Transverse colon (tissue), 4 donors: ENCODE measurements at regions of chr3 and their contacts with region 1.

Region 1: DNA sequence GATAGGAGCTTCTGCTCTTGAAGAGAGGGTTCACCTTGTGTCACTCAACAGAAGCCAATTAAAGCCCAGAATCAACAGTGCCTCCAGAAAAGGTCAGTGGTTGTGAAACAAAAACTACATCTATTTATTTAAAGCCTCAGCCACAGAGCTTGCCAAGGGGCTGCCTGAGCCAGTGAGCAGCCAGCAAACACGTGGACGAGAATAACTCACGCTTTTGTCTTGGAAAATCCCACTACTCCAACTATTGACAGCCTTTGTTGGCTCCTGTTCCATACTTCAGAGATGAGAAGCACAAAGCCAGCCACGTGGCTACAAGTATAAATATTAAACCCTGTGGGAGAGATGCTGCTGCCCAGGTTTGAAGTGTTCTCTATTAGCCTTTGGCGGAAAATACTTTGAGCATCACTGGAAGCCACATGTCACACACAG is 10.3 kb downstream of the GPR156 start:
- DNase-seq: no peak
- H3K4me3 ChIP-seq: no peak overlapping the region
- H3K27ac ChIP-seq: no peak overlapping the region
- H3K4me1 ChIP-seq: peaks cover 0 to 8% (median 1%) of the 10 kb centered on the region in 4 donors
- H3K27me3 ChIP-seq: no peaks in the 10 kb centered on the region
- CTCF ChIP-seq: no peak
- EP300 ChIP-seq: no peak
- POLR2A ChIP-seq: no peak

Region 2: DNA sequence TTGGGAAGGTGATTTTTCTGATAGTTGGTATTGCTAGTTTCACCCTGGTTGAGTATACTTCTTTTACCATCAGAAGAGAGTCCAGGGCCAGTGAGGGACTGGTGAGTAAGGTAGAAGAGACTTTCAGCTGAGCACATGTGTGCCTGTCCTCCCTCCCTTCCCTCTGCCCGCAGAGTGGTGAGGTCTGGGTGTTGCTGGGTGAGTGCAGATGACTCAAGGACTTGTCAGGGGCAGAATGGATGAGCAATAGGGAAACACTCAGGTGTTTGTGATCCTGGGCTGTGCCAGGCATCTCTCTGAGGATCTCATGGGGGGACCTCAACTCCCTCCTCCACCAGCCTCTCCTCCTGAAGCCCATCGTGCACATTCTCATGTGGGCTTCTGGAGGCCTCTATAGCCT is 104.5 kb before region 1 on chr3:
- in situ Hi-C with region 1: no loop called
- intact Hi-C with region 1: loop called (anchors 5 kb)
- DNase-seq: no peak
- H3K4me3 ChIP-seq: no peak overlapping the region
- H3K27ac ChIP-seq: no peak overlapping the region
- H3K4me1 ChIP-seq: no peaks in the 10 kb centered on the region
- H3K27me3 ChIP-seq: no peaks in the 10 kb centered on the region
- CTCF ChIP-seq: no peak
- EP300 ChIP-seq: no peak
- POLR2A ChIP-seq: no peak

Region 3: GRCh38 chr3:120526011-120526870 is 251.5 kb after region 1 on chr3:
- in situ Hi-C with region 1: loop called in 1 of 4 experiments (anchors 25 kb)
- intact Hi-C with region 1: no loop called
- DNase-seq: no peak
- H3K4me3 ChIP-seq: no peak overlapping the region
- H3K27ac ChIP-seq: no peak overlapping the region
- H3K4me1 ChIP-seq: no peaks in the 10 kb centered on the region
- H3K27me3 ChIP-seq: no peaks in the 10 kb centered on the region
- CTCF ChIP-seq: no peak
- EP300 ChIP-seq: no peak
- POLR2A ChIP-seq: no peak

Region 4: GRCh38 chr3:121223116-121223515 is 948.4 kb after region 1 on chr3:
- in situ Hi-C with region 1: no loop called
- intact Hi-C with region 1: no loop called
- DNase-seq: no peak
- H3K4me3 ChIP-seq: no peak overlapping the region
- H3K27ac ChIP-seq: no peak overlapping the region
- H3K4me1 ChIP-seq: no peaks in the 10 kb centered on the region
- H3K27me3 ChIP-seq: no peaks in the 10 kb centered on the region
- CTCF ChIP-seq: no peak
- EP300 ChIP-seq: no peak
- POLR2A ChIP-seq: no peak